Activated CD4-positive, alpha-beta T cell treated with anti-CD3 and anti-CD28 coated beads, Interleukin-2, amount 10 ng/mL, durations not matched to agents 24 days and 14 days (primary cell): ENCODE measurements at regions of chr13 and their contacts with region 1.

Region 1: DNA sequence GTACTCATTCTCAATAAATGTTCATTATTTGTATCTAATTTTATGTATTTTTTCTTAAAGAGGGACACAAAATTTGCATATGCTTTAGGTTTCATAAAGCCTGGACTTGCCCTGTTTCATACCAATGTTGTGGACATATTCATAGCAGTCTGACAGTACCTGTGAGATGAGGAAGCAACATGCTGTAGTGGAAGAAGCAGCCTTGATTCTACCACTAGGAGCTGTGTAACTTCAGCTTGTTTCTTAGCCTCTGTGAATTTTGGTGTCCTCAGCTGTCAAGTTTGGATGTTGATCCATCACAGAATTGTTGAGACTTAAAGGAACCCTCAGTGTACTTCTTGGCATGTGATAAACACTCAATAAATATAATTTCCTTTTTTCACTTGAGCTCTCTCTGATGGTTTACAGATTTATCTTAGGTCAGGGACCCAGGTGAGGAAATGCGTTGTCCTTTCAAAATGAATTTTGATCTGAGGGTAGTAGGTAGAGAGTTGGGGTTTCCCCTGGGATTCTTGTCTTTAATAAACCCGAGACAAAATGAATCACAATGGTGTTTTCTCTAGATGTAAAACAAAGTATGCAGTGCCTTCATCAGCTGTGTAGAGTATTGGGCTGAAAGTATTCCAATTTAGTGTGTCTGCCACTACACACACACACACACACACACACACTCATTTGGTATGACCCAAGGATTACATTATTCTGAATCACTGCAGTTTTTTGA is 152.1 kb downstream of the KCNRG start:
- DNase-seq: no peak
- H3K4me3 Mint-ChIP-seq: no peak overlapping the region
- H3K27ac Mint-ChIP-seq: no peak overlapping the region
- H3K4me1 Mint-ChIP-seq: peaks cover 8% of the 10 kb centered on the region
- H3K27me3 Mint-ChIP-seq: peaks cover 33% of the 10 kb centered on the region

Region 2: DNA sequence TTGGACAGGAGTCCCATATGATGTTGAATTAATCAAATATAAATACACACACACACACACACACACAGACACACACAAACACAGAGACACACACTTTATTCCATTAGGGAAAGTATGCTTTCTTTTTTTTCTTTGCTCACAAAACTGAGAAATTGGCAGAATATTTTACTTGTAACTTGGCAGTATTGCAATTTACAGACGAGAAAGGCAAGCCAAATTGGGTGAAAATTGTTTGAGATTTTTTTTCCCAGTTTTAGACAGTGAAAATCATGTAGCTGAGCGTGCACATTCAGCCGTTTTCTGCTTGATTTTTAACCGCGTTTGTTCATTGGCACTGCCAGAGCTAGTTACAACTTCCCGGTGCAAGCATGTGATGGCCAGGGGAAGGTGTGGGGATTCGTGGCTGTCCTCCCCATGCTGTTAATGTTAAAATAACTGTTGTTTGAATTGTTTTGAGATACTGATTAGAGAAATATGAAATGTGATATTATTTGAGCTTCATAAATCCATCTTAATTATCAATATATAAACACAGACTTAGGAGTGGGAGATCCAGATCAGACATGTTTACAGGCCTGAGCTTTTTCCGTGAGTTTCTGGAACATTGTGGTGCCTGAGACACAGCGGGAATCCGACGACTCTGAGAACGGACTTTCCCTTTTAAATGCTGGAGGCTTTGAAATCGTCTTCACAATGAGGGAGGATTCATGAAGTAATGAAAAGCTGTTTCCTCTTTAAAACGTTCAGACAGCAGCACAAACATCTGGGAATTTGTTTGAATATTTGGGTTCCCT is 26.6 kb before region 1 on chr13:
- intact Hi-C with region 1: loop called (anchors 1 kb)
- DNase-seq: no peak
- H3K4me3 Mint-ChIP-seq: no peak overlapping the region
- H3K27ac Mint-ChIP-seq: no peak overlapping the region
- H3K4me1 Mint-ChIP-seq: peaks cover 6% of the 10 kb centered on the region
- H3K27me3 Mint-ChIP-seq: peaks cover 43% of the 10 kb centered on the region

Region 3: DNA sequence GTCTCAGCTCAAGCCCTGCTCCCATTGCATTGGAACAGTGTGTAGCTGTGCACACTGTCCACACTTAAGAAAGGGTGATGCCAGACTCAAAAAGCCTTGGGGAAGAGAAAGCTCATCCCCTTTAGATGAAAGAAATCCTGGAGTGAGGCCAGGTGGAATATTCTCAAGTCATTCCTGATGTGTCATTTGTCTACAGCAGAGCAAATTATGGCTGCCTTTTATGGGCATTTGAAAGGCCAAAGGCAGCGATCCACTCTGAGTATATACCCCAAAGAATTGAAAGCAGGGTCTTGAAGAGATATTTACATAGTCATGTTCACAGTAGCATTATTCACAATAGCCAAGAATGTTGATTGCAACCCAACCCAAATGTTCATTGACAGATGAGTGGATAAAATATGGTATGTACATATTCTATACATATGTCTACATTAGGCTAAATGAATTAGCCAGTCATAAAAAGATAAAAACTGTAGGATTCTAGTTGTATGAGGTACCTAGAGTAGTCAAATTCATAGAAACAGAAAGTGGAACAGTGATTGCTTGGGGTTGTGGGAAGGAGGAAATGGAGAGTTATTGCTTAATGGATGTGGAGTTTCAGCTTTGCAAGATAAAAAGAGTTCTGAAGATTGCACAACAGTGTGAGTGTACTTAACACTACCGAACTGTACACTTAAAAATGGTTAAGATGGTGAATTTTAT is 62.7 kb after region 1 on chr13:
- intact Hi-C with region 1: loop called (anchors 2 kb)
- DNase-seq: peak; percentile 60
- H3K4me3 Mint-ChIP-seq: peak overlapping the region; percentile 32
- H3K27ac Mint-ChIP-seq: peak overlapping the region; percentile 20
- H3K4me1 Mint-ChIP-seq: peaks cover 51% of the 10 kb centered on the region
- H3K27me3 Mint-ChIP-seq: peaks cover 26% of the 10 kb centered on the region